HepG2 (cell line): ENCODE measurements at regions of chr17 and their contacts with region 1.

Region 1: DNA sequence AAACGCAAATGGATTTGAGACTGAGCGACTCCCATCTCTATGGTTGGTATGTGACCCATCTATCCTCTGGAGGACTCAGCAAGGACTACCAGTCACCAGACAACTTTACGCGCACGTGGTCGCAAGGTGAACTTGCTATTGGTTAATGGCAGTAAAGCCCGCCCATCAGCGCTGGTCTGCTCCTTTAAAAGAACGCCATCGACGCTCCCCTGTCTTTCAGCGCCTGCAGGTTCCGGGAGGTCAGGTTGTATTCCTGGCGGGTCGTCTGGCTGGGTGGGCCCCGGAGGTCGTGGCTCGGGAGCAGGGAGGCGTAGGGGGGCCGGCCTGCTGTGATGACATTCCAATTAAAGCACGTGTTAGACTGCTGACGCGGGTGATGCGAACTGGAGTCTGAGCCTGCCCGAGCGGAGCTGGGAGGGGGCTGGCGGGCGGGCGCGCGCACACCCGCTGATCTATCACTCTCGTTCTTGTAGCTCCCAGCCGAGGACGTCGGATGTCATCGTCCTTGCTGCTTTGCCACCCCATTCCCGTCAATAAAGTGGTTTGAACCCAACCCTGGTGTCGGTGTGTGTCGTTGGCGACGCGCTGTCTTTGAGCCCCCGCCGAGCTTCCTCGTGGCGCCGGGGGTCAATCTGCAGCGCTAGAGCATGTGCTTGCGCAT is 15.9 kb upstream of the ERN1 start:
- DNase-seq: peak; percentile 100
- ATAC-seq: peak; percentile 78
- H3K4me3 ChIP-seq: peak overlapping the region; percentile 75 to 86 (median 84)
- H3K27ac ChIP-seq: peak overlapping the region; percentile 88
- H3K4me1 ChIP-seq: peaks cover 55% of the 10 kb centered on the region
- H3K27me3 ChIP-seq: no peaks in the 10 kb centered on the region; a peak in 1 of 5 replicates
- CTCF ChIP-seq: no peak; the same call in none of the 2 replicates
- EP300 ChIP-seq: peak in 1 of 2 experiments; percentile 25; a peak in 1 of 4 replicates
- POLR2A ChIP-seq: peak; percentile 100
- RAD21 ChIP-seq: peak; percentile 74

Region 2: DNA sequence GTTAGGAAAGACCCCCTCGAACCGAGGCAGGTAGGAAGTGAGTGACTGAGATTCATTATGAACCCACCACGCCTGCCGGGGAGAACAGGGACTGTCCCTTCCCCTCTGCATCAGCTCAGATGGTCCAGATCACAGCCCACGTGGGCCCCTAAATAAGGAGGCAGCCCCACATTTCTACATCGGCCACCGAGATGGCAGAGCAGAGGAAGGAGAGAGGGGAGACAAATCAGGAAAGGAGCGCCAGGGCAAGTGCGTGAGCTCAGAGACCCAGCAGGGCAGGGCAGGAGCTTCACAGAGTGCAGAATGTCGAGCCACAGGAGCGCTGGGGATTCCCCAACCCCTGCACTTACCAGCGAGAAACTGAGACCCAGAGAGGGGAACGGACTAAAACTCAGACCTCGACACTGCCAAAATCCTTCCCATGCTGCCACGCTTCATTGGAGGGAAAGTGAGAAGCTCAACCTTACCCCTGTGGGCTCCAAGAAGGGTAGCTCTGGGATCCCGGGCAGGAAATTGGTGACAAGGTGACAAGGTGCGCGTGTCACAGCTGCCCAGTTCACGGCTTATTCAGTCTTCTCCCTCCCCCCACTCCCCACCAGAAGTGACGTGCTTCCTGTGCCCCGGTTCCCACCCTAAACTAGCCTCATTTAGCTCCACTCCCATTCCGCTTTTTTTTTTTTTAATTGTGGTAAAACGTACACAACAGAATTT is 125.7 kb before region 1 on chr17 and contains the start of gene ICAM2:
- CTCF ChIA-PET with region 1: no interaction called
- POLR2A ChIA-PET with region 1: interaction called, 12 read pairs
- in situ Hi-C with region 1: no loop called
- intact Hi-C with region 1: no loop called
- DNase-seq: no peak
- ATAC-seq: peak; percentile 68
- H3K4me3 ChIP-seq: peak within 1 kb of the TSS; percentile 50 to 77 (median 60)
- H3K27ac ChIP-seq: no peak within 1 kb of the TSS
- H3K4me1 ChIP-seq: peaks cover 39% of the 10 kb centered on the region
- H3K27me3 ChIP-seq: no peaks in the 10 kb centered on the region; a peak in 1 of 5 replicates
- CTCF ChIP-seq: no peak
- EP300 ChIP-seq: no peak
- POLR2A ChIP-seq: no peak
- RAD21 ChIP-seq: no peak
- total RNA-seq, gene ICAM2: 7.9 and 10.9 TPM in 2 replicates

Region 3: DNA sequence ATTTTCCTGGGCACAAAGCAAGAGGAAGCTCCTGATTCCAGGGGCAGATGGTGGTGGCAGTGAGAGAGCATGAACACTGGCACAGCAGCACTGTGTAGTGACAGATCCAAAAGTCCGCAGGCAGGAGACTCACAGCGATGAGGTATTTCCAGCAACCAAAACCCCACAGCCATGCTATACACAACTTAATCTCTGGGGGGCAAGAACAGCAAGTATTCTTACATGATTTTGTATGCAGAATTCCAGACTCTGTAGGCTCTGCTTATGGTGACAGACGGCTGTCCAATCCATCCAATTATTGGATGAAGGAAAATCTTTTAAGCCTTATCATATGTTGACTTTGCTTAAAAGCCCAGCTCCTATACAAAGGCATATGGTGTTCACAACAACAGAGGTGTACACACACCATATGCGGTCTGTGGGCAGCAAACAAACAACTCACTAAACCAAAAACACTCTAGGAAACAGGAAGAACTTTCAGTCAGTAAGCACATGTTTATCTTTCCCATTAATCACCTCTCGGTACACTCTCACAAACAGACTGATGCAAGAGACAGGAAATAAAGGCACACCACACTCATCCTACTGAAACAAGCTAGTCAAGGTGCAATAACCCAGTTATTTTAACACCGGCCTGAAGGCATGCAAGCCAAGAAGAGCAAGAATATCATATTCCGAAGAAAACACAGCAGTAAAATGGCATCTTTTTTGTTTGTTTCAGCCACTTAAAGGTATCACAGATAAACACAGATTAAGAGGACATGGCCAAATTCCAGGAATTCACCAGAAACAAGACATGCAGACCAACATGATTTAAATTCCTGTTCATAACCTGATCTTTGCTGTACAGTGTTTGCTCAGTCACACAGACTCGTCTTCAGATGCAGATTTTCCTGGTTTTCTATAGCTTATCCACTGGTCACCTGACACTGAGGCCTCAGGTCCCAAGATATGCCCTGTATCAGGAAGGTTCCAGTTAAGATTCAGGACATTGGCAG is 63.8 kb before region 1 on chr17:
- CTCF ChIA-PET with region 1: no interaction called
- POLR2A ChIA-PET with region 1: interaction called, 56 read pairs
- in situ Hi-C with region 1: no loop called
- intact Hi-C with region 1: no loop called
- DNase-seq: peak; percentile 93
- ATAC-seq: peak; percentile 83
- H3K4me3 ChIP-seq: peak overlapping the region; percentile 3 to 39 (median 25); a peak in 4 of 6 replicates
- H3K27ac ChIP-seq: peak overlapping the region; percentile 84
- H3K4me1 ChIP-seq: peaks cover 85% of the 10 kb centered on the region
- H3K27me3 ChIP-seq: no peaks in the 10 kb centered on the region
- CTCF ChIP-seq: no peak; the same call in 1 of the 2 replicates
- EP300 ChIP-seq: peak in 1 of 2 experiments; percentile 98; a peak in 2 of 4 replicates
- POLR2A ChIP-seq: no peak
- RAD21 ChIP-seq: peak; percentile 28; the same call in 1 of the 2 replicates

Region 4: DNA sequence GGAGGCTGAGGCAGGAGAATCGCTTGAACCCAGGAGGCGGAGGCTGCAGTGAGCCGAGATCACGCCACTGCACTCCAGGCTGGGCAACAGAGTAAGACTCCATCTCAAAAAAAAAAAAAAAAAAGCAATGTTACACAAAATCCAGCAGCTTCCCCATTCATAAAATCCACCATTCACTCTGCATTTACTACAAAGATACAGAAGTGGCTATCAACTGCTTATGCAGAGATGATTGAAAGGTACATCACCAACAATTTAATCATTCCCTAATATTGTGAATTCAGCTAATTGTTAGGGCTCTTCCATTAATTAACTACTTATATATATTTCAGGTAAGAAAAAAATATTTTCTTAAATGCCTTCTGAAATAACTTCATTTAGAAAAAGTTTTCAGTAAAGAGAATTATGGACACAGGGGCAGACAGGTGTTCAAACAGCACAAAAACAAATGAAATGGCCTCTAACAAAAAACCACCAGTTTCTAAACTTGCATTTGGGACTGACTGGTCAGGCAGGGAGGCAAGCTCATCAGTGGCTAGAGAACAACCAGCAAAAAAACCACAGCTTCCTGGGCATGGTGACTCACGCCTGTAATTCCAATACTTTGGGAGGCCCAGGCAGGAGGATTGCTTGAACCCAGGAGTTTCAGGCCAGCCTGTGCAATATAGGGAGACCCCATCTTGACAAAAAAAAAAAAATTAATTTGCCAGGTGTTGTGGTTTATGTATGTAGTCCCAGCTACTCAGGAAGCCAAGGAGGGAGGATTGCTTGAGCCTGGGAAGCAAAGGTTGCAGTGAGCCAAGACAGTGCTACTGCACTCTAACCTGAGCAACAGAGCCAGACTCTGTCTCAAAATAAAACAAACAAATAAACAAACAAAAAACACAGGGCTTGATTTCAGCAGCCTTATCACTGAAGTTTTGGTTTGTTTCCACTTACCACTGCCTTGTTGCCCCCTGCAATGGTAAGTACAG is 42.2 kb before region 1 on chr17:
- CTCF ChIA-PET with region 1: no interaction called
- POLR2A ChIA-PET with region 1: no interaction called
- in situ Hi-C with region 1: no loop called
- intact Hi-C with region 1: no loop called
- DNase-seq: no peak
- ATAC-seq: no peak
- H3K4me3 ChIP-seq: no peak overlapping the region
- H3K27ac ChIP-seq: no peak overlapping the region
- H3K4me1 ChIP-seq: peaks cover 70% of the 10 kb centered on the region
- H3K27me3 ChIP-seq: no peaks in the 10 kb centered on the region
- CTCF ChIP-seq: no peak
- EP300 ChIP-seq: no peak
- POLR2A ChIP-seq: no peak
- RAD21 ChIP-seq: no peak

Region 5: GRCh38 chr17:64166876-64167275 is 21.0 kb after region 1 on chr17:
- CTCF ChIA-PET with region 1: no interaction called
- POLR2A ChIA-PET with region 1: interaction called, 17 read pairs
- in situ Hi-C with region 1: no loop called
- intact Hi-C with region 1: no loop called
- DNase-seq: no peak
- ATAC-seq: no peak
- H3K4me3 ChIP-seq: no peak overlapping the region
- H3K27ac ChIP-seq: no peak overlapping the region
- H3K4me1 ChIP-seq: no peaks in the 10 kb centered on the region
- H3K27me3 ChIP-seq: no peaks in the 10 kb centered on the region
- CTCF ChIP-seq: no peak
- EP300 ChIP-seq: no peak
- POLR2A ChIP-seq: no peak
- RAD21 ChIP-seq: no peak

Region 6: GRCh38 chr17:64216338-64217248 is 70.7 kb after region 1 on chr17:
- CTCF ChIA-PET with region 1: no interaction called
- POLR2A ChIA-PET with region 1: interaction called, 127 read pairs
- in situ Hi-C with region 1: no loop called
- intact Hi-C with region 1: no loop called
- DNase-seq: peak; percentile 94
- ATAC-seq: peak; percentile 99
- H3K4me3 ChIP-seq: peak overlapping the region; percentile 40 to 68 (median 55)
- H3K27ac ChIP-seq: peak overlapping the region; percentile 97
- H3K4me1 ChIP-seq: peaks cover 48% of the 10 kb centered on the region
- H3K27me3 ChIP-seq: no peaks in the 10 kb centered on the region
- CTCF ChIP-seq: peak; percentile 93
- EP300 ChIP-seq: peak; percentile 50 to 85; a peak in 3 of 4 replicates
- POLR2A ChIP-seq: peak; percentile 70 to 75; a peak in 3 of 4 replicates
- RAD21 ChIP-seq: peak; percentile 84; the same call in 1 of the 2 replicates

Region 7: GRCh38 chr17:64281962-64282727 is 136.3 kb after region 1 on chr17:
- CTCF ChIA-PET with region 1: interaction called, 4 read pairs
- POLR2A ChIA-PET with region 1: interaction called, 18 read pairs
- in situ Hi-C with region 1: no loop called
- intact Hi-C with region 1: loop called (anchors 5 kb)
- DNase-seq: peak; percentile 72
- ATAC-seq: peak; percentile 48
- H3K4me3 ChIP-seq: no peak overlapping the region
- H3K27ac ChIP-seq: no peak overlapping the region
- H3K4me1 ChIP-seq: peaks cover 31% of the 10 kb centered on the region
- H3K27me3 ChIP-seq: no peaks in the 10 kb centered on the region; a peak in 1 of 5 replicates
- CTCF ChIP-seq: peak; percentile 85
- EP300 ChIP-seq: no peak
- POLR2A ChIP-seq: no peak
- RAD21 ChIP-seq: peak; percentile 85